Left ventricle myocardium superior (tissue), 1 donor: ENCODE measurements at regions of chr3 and their contacts with region 1.

Region 1: DNA sequence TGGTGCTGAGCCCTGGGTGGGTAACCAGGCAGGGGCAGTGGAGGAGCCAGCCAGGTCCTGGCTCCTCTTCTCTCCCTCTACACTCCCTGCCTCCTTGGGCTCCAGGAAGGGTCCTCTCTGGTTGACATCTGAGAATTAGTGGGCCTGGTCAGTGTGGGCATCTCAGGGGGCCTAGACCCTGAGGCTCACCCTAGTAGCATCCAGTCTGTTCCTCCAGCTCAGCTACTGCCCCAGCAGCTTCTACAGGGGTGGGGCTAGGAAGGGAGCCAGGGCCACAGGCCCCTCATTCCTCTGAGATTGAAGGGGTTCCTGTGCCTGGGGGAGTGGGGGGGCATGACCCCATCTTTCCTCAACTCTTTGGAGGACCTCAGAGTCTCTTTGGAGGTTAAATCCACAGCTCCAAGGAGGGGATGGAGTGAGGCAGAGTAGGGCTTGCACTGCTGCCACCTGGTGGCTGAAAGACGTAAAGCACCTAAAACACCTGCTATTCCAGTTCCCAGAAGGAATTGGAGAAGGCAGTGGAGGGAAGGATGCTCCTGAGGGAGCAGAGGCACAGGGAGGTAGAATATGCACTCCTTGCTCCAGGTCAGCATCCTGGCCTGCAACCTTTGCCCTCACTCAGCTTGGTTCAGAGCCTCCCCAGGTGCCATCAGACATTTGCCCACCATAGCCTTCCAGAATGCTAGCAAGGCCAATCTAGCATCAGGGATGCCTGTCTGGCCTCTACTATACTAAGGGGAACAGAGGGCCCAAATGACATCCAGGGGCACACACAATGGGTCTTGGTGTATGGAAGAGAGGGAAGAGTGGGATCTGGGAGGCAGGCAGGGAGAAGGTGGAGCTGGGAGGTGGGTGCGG is 25.1 kb downstream of the C3orf18 start:
- DNase-seq: peak; percentile 70
- ATAC-seq: peak; percentile 80

Region 2: GRCh38 chr3:50347194-50347918 is 195.1 kb before region 1 on chr3:
- intact Hi-C with region 1: loop called (anchors 5 kb)
- DNase-seq: peak; percentile 77
- ATAC-seq: no peak

Region 3: DNA sequence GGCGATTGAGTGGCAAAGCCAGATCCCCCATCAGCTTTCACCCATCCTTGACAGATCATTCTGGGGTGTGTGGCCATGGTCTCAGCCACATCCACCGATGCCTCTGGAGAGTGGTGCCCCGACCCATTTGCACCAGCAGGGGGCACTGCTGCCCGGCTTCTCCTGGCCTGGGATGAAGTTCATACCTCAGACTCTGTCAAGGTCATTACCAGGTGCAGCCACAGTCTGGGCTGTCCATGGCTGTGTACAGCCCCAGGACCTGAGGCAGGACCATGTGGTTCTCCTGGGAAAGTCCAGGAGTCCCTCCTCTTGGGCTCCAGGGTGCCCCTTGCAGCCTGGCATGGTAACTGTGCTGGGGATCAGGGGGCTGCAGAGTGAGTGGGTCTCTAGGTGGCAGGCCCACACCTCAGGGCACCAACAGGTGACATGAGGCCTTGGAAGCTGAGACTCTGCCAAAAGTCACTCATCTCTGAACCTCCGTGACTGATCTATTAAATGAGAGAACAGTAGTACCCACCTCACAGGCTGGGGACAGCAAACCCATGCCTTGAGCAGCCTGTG is 106.2 kb before region 1 on chr3:
- intact Hi-C with region 1: loop called (anchors 2 kb)
- DNase-seq: peak; percentile 82
- ATAC-seq: peak; percentile 86